PC-3 (cell line): ENCODE measurements at regions of chr12 and their contacts with region 1.

Region 1: DNA sequence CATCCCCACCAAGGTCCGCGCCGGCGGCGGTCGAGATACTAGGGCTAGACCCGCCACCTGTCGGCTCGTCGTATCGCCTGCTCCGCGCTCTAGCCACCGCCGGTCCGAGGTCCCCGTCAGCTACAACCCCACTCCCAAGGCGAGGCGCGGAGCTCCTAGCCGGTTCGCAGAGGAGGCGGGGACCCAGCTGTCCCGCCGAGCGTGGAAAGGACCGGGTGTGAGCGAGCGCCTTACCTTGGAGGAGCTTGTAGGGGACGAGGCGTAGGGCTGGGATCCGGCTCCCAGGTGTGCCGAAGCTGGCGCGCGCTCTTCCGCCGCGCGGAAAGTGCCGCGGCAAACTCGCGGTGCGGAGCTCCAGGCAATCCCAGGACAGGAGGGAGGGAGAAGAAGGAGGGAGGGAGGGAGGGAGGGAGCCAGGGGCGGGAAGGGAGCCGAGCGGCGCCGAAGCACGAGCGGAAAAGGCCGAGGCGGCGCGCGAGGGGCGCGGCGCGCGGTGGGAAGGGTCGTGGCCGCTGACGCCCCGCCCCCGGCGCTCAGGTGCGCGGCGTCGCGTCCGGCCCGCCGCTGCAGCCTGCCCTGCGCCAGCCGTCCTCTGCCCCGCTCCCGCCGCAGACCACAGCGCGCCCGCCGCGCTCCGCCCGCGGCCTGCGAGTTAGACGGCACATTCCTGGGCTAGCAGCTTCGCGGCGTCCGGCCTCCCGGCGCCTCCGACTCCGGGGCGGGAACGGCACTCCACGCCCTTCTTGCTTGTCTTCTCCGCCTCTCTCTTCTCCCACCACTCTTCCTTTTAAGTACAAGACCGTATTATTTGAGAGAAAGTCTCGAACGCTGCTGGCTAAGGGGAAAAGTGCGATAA is at the start of gene PAWR:
- DNase-seq: peak; percentile 92
- ATAC-seq: peak; percentile 62
- H3K4me3 ChIP-seq: peak within 1 kb of the TSS; percentile 87
- H3K27ac ChIP-seq: peak within 1 kb of the TSS; percentile 82
- H3K4me1 ChIP-seq: peaks cover 38% of the 10 kb centered on the region
- H3K27me3 ChIP-seq: no peaks in the 10 kb centered on the region
- CTCF ChIP-seq: no peak; the same call in 1 of the 2 replicates
- total RNA-seq, gene PAWR: 141 and 214 TPM in 2 replicates

Region 2: GRCh38 chr12:79407671-79408622 is 282.9 kb before region 1 on chr12:
- CTCF ChIA-PET with region 1: no interaction called
- POLR2A ChIA-PET with region 1: no interaction called
- intact Hi-C with region 1: loop called (anchors 2 kb)
- DNase-seq: peak; percentile 94
- ATAC-seq: peak; percentile 99
- H3K4me3 ChIP-seq: peak overlapping the region; percentile 24; the same call in 1 of the 2 replicates
- H3K27ac ChIP-seq: peak overlapping the region; percentile 33
- H3K4me1 ChIP-seq: peaks cover 23% of the 10 kb centered on the region
- H3K27me3 ChIP-seq: no peaks in the 10 kb centered on the region
- CTCF ChIP-seq: peak; percentile 97

Region 3: GRCh38 chr12:79420146-79420618 is 270.7 kb before region 1 on chr12:
- CTCF ChIA-PET with region 1: interaction called, 4 read pairs
- POLR2A ChIA-PET with region 1: interaction called, 11 read pairs
- intact Hi-C with region 1: loop called (anchors 1 kb)
- DNase-seq: peak; percentile 95
- ATAC-seq: peak; percentile 55
- H3K4me3 ChIP-seq: 0 out of 2 replicates have a peak overlapping the region, but pooled peaks have one; percentile 11
- H3K27ac ChIP-seq: peak overlapping the region; percentile 63
- H3K4me1 ChIP-seq: peaks cover 86% of the 10 kb centered on the region
- H3K27me3 ChIP-seq: no peaks in the 10 kb centered on the region
- CTCF ChIP-seq: peak; percentile 89

Region 4: GRCh38 chr12:79555028-79555930 is 135.6 kb before region 1 on chr12:
- CTCF ChIA-PET with region 1: no interaction called
- POLR2A ChIA-PET with region 1: interaction called, 3 read pairs
- intact Hi-C with region 1: loop called (anchors 1 kb)
- DNase-seq: peak; percentile 77
- ATAC-seq: peak; percentile 79
- H3K4me3 ChIP-seq: no peak overlapping the region
- H3K27ac ChIP-seq: no peak overlapping the region
- H3K4me1 ChIP-seq: peaks cover 9% of the 10 kb centered on the region
- H3K27me3 ChIP-seq: no peaks in the 10 kb centered on the region
- CTCF ChIP-seq: peak; percentile 91

Region 5: GRCh38 chr12:79634957-79635471 is 55.9 kb before region 1 on chr12:
- CTCF ChIA-PET with region 1: no interaction called
- POLR2A ChIA-PET with region 1: no interaction called
- intact Hi-C with region 1: loop called (anchors 2 kb)
- DNase-seq: no peak
- ATAC-seq: no peak
- H3K4me3 ChIP-seq: no peak overlapping the region
- H3K27ac ChIP-seq: no peak overlapping the region
- H3K4me1 ChIP-seq: no peaks in the 10 kb centered on the region
- H3K27me3 ChIP-seq: no peaks in the 10 kb centered on the region
- CTCF ChIP-seq: no peak

Region 6: GRCh38 chr12:79674629-79675028 is 16.2 kb before region 1 on chr12:
- CTCF ChIA-PET with region 1: no interaction called
- POLR2A ChIA-PET with region 1: interaction called, 14 read pairs
- intact Hi-C with region 1: no loop called
- DNase-seq: peak; percentile 81
- ATAC-seq: peak; percentile 71
- H3K4me3 ChIP-seq: no peak overlapping the region
- H3K27ac ChIP-seq: peak overlapping the region; percentile 33; the same call in 1 of the 2 replicates
- H3K4me1 ChIP-seq: peaks cover 20% of the 10 kb centered on the region
- H3K27me3 ChIP-seq: no peaks in the 10 kb centered on the region
- CTCF ChIP-seq: no peak

Region 7: DNA sequence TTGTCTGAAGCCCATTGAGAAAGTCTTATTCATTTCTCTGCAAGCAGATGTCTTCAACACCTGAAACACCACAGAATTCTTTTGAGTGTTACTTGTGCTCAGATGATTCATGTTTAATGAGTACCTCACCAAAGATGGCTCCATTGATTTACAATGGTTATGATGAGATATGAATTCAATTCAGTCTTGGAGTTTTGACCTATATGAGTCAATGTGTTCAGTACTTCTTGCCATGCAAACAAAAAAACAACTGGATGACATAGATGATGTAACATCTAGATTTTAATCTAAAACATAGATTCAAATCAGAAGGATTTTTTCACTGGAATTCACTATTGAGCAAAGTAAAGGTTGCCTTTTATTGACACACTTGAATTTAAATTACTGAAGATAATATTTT is 15.3 kb after region 1 on chr12:
- CTCF ChIA-PET with region 1: no interaction called
- POLR2A ChIA-PET with region 1: no interaction called
- intact Hi-C with region 1: no loop called
- DNase-seq: peak; percentile 83
- ATAC-seq: peak; percentile 35; the same call in 1 of the 2 replicates
- H3K4me3 ChIP-seq: no peak overlapping the region
- H3K27ac ChIP-seq: peak overlapping the region; percentile 19; the same call in 1 of the 2 replicates
- H3K4me1 ChIP-seq: peaks cover 17% of the 10 kb centered on the region
- H3K27me3 ChIP-seq: no peaks in the 10 kb centered on the region
- CTCF ChIP-seq: no peak

Region 8: DNA sequence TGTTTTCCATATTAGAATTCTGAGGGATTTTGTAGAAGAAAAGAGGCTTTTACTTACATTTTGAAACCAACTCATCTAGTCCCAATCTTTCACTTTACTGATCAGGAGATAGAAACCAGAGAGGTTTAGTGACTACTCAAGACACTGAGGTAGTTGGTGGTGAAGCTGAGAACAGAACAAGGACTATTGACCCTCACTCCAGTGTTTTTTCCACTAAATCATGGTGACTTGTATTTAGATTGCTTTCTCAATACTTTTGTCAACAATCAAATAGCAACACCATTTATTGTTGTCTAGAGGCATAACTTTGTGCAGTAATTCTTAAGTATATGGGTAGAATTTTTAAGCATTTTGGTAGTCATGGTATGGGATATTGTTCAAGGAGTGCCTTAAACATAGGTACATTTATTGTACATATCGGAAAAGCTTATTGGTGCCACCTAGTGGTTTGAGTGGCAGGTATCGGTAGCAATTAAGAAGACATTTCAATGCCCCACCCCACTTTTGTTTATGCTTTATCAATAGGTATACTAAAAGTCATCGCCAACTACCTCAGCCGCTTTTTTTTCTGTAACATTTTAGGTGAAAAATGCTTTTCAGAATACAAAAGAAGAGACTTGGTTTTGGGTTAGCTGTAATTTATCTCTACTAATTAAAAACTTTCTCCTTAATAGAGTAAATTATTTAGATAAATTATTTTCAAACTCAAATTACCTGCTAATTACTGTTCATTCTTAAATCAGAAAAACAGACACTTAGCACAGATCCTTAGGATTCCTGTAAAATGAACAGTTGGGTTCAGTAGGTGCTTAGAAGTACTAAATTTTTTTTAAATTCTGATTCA is 47.2 kb after region 1 on chr12:
- CTCF ChIA-PET with region 1: interaction called, 3 read pairs
- POLR2A ChIA-PET with region 1: no interaction called
- intact Hi-C with region 1: loop called (anchors 1 kb)
- DNase-seq: peak; percentile 89
- ATAC-seq: peak; percentile 72
- H3K4me3 ChIP-seq: no peak overlapping the region
- H3K27ac ChIP-seq: no peak overlapping the region
- H3K4me1 ChIP-seq: peaks cover 4% of the 10 kb centered on the region; the same call in 1 of the 2 replicates
- H3K27me3 ChIP-seq: no peaks in the 10 kb centered on the region
- CTCF ChIP-seq: peak; percentile 87

Region 9: DNA sequence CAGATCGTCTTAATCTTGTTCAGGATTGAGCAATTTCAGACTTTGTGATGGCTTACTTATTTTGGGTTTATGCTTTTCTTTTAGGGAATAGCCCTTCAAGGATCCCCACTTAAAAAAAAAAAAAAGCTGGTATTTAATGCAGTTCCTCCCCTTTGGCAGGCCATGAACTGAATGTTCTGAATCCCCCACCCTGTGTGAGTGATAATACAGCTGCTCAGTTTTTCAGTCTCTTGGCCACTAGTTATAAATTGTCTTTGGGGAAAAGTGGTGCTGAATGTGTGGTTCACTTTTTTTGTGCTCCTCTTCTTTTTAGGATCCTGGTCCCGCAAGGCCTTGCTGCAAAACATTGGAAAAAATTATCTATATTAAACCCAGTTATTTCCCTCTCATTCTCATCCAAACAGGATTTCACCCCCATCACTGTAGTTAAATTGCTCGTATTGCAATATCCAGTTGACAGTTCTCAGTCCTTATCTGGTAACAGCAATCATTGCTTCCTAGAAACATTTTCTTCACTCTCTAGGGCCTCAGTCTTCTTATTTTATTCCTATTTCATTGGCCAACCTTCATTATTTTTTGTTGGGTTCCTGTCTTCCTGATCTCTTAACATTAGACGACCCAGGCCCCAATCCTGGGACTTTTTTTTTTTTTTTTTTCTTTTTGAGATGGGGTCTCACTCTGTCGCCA is 73.0 kb after region 1 on chr12:
- CTCF ChIA-PET with region 1: no interaction called
- POLR2A ChIA-PET with region 1: no interaction called
- intact Hi-C with region 1: no loop called
- DNase-seq: no peak
- ATAC-seq: no peak
- H3K4me3 ChIP-seq: no peak overlapping the region
- H3K27ac ChIP-seq: no peak overlapping the region
- H3K4me1 ChIP-seq: no peaks in the 10 kb centered on the region
- H3K27me3 ChIP-seq: no peaks in the 10 kb centered on the region
- CTCF ChIP-seq: no peak